Astrocyte of the cerebellum (primary cell): ENCODE measurements at regions of chr1 and their contacts with region 1.

Region 1: GRCh38 chr1:20775700-20776099 is 11.4 kb downstream of the HP1BP3 start:
- DNase-seq: no peak
- H3K4me3 ChIP-seq: no peak overlapping the region
- CTCF ChIP-seq: no peak

Region 2: DNA sequence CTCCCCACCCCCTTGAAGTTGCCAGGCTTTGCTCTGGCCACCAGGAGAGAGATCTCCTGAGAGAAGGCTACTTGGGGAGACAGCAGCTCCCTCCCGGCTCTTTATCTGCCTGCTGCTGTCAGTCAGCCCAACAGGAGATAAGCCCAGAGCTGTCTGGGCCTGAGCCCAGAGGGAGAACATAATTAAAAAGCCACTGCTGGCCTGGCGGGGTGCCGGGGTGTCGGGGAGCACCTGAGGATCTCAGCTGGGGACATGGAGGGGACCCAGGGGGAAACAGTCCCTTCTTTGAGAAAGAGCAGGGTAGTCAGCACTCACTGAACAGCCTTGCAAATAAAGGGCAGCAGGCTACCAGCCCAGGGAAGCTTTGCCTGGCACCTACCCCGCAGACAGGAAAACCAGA is 467.1 kb before region 1 on chr1:
- in situ Hi-C with region 1: no loop called
- DNase-seq: no peak
- H3K4me3 ChIP-seq: no peak overlapping the region
- CTCF ChIP-seq: no peak

Region 3: DNA sequence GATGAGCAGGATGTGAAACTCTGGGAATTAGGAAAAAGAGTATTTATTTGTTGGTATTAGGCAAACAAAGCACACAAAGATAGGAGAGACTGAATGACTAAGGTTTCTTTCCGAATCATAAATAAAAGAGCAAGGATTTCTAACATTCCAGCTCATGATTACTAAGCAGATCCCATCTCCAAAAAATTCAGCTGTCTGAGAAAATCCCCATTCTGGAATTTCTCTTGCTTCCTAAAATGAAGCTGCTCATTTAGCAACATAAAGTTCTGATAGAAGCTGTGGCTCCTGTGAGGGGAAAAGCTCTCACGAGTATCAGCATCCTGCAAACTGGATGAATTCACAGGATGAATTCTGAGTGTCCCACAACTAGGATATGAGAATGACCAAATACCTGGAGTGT is 36.5 kb before region 1 on chr1:
- in situ Hi-C with region 1: loop called (anchors 5 kb)
- DNase-seq: no peak
- H3K4me3 ChIP-seq: no peak overlapping the region
- CTCF ChIP-seq: no peak